CD4-positive, alpha-beta T cell (primary cell): ENCODE measurements at regions of chr1 and their contacts with region 1.

Region 1: GRCh38 chr1:183281553-183282091 is 95.6 kb downstream of the LAMC2 start:
- DNase-seq: peak; percentile 41 to 76 (median 58)
- ATAC-seq: peak; percentile 71
- H3K4me3 ChIP-seq: no peak overlapping the region
- H3K4me3 Mint-ChIP-seq: no peak overlapping the region
- H3K27ac ChIP-seq: no peak overlapping the region
- H3K27ac Mint-ChIP-seq: no peak overlapping the region
- H3K4me1 ChIP-seq: peaks cover 5% of the 10 kb centered on the region
- H3K4me1 Mint-ChIP-seq: no peaks in the 10 kb centered on the region
- H3K27me3 ChIP-seq: no peaks in the 10 kb centered on the region
- H3K27me3 Mint-ChIP-seq: peaks cover 16% of the 10 kb centered on the region
- CTCF ChIP-seq: peak; percentile 80

Region 2: DNA sequence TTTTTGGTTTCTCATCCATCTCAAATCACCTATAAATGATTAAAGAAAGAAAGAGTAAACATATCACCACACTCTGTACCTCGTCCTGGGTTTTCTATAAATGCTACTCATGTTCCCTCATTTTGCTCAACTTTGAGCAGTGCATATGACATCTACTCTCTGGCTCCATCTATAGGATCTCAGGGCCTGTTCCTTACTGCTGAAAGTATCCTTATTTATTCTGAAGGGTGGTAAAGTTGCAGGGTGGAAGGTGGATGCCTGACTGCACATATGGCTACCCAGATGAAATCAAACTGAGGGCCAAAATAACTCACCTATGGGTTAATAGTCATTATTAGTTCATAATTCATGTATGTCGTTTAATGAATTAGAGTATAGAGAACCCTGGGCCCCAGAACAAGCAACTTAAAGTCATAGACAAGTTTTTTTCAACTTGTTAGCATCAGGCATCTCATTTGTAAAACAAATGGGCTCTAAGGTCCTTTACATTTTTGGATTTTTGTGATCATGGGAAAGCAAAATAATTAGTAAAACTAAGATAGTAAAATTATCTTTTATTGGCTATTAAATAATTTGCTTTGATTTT is 262.1 kb after region 1 on chr1:
- CTCF ChIA-PET with region 1: no interaction called
- POLR2A ChIA-PET with region 1: no interaction called
- intact Hi-C with region 1: loop called (anchors 1 to 5 kb)
- DNase-seq: peak in 5 of 14 experiments; percentile 13 to 69 (median 62)
- ATAC-seq: peak; percentile 99
- H3K4me3 ChIP-seq: no peak overlapping the region
- H3K4me3 Mint-ChIP-seq: no peak overlapping the region
- H3K27ac ChIP-seq: no peak overlapping the region
- H3K27ac Mint-ChIP-seq: peak overlapping the region; percentile 19
- H3K4me1 ChIP-seq: no peaks in the 10 kb centered on the region
- H3K4me1 Mint-ChIP-seq: peaks cover 6% of the 10 kb centered on the region
- H3K27me3 ChIP-seq: no peaks in the 10 kb centered on the region
- H3K27me3 Mint-ChIP-seq: no peaks in the 10 kb centered on the region
- CTCF ChIP-seq: peak; percentile 57

Region 3: DNA sequence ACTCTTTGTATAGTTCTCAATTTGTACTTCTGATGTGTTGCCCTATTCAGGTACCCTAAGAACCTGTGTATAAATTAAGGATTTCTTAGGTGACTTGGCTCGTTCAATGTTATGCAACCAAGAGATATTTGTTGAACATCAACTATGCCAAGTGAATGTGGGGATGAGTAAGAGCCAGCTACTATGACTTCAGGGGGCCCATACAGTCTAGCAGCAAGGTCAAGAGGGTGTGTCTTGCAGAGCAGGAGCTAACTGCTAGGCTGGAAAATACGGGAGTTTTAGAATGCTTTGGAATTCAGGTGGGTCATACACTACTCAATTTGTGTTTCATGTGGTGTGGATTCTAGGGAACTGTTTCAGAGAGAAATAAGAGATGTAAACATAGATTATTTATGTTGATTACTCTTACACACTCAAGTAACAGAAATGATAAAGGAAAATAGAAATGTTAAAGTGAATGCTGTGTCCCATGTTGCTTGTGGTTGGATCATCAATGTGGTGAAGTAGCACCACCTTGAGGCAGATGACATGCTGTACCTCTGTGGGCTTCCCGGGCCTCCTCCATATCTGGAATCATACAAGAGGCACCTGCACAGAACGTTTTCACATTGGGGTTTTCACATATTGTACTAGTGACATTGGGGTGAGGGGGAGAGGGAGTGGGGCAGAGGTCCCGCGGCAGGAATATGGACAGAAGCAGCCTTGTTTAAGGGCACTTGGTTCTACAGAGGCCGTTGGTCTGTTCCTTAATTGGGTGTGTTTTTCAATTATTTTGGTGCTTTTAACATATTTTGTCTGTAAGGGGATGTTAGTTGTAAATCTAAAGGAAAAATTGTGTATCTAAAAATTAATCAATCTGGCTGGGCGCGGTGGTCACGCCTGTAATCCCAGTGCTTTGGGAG is 341.5 kb after region 1 on chr1:
- CTCF ChIA-PET with region 1: no interaction called
- POLR2A ChIA-PET with region 1: no interaction called
- intact Hi-C with region 1: loop called (anchors 1 to 2 kb)
- DNase-seq: peak; percentile 18 to 76 (median 36)
- ATAC-seq: peak; percentile 99
- H3K4me3 ChIP-seq: no peak overlapping the region
- H3K4me3 Mint-ChIP-seq: no peak overlapping the region
- H3K27ac ChIP-seq: no peak overlapping the region
- H3K27ac Mint-ChIP-seq: peak overlapping the region; percentile 60
- H3K4me1 ChIP-seq: no peaks in the 10 kb centered on the region
- H3K4me1 Mint-ChIP-seq: peaks cover 25% of the 10 kb centered on the region
- H3K27me3 ChIP-seq: no peaks in the 10 kb centered on the region
- H3K27me3 Mint-ChIP-seq: no peaks in the 10 kb centered on the region
- CTCF ChIP-seq: peak; percentile 64

Region 4: GRCh38 chr1:183685112-183685713 is 403.6 kb after region 1 on chr1:
- CTCF ChIA-PET with region 1: no interaction called
- POLR2A ChIA-PET with region 1: no interaction called
- intact Hi-C with region 1: loop called (anchors 1 to 2 kb)
- DNase-seq: peak in 7 of 14 experiments; percentile 2 to 73 (median 30)
- ATAC-seq: peak; percentile 60
- H3K4me3 ChIP-seq: no peak overlapping the region
- H3K4me3 Mint-ChIP-seq: no peak overlapping the region
- H3K27ac ChIP-seq: no peak overlapping the region
- H3K27ac Mint-ChIP-seq: no peak overlapping the region
- H3K4me1 ChIP-seq: no peaks in the 10 kb centered on the region
- H3K4me1 Mint-ChIP-seq: no peaks in the 10 kb centered on the region
- H3K27me3 ChIP-seq: no peaks in the 10 kb centered on the region
- H3K27me3 Mint-ChIP-seq: no peaks in the 10 kb centered on the region
- CTCF ChIP-seq: peak; percentile 85